ENCODE measurements at regions of chr10 and their contacts with region 1.

Region 1: GRCh38 chr10:119445311-119445934 is 97.1 kb downstream of the RGS10 start:
- DNase-seq: peak; percentile 94
- H3K4me3 ChIP-seq: peak overlapping the region in 1 of 2 experiments; percentile 23; a peak in 1 of 4 replicates
- H3K27ac ChIP-seq: no peak overlapping the region
- H3K4me1 ChIP-seq: peaks cover 3 to 8% of the 10 kb centered on the region in 2 experiments; a peak in 2 of 4 replicates
- H3K27me3 ChIP-seq: no peaks in the 10 kb centered on the region
- CTCF ChIP-seq: peak; percentile 90
- EP300 ChIP-seq: no peak
- RAD21 ChIP-seq: peak; percentile 86

Region 2: DNA sequence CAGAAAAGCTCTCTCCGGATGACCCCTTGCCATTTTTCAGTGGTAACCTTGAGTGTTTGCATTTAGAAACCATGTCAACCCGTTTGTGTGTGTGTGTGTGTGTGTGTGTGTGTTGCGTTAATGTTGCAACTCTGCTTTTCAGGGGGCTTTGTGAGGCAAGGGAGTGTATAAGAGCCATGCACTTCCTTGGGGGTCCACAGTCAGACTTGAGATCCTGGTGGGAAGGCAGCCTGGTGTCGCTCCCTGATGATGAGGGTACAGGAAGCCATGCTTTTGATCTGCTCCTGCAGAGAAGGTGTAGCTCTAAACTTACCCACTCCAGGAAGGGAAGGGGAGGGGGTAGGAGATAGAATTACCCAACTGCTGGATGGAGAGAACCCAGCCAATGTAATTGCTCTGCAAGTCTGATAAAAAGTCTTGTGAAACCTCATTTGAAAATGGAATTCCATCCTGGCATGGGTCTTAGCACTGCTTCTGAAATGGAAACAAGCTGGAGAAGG is 227.4 kb before region 1 on chr10:
- CTCF ChIA-PET with region 1: interaction called, 19 read pairs
- POLR2A ChIA-PET with region 1: no interaction called
- DNase-seq: no peak
- H3K4me3 ChIP-seq: no peak overlapping the region
- H3K27ac ChIP-seq: no peak overlapping the region
- H3K4me1 ChIP-seq: peaks cover 7 to 35% of the 10 kb centered on the region in 2 experiments; a peak in 3 of 4 replicates
- H3K27me3 ChIP-seq: no peaks in the 10 kb centered on the region
- CTCF ChIP-seq: no peak
- EP300 ChIP-seq: no peak
- RAD21 ChIP-seq: no peak

Region 3: DNA sequence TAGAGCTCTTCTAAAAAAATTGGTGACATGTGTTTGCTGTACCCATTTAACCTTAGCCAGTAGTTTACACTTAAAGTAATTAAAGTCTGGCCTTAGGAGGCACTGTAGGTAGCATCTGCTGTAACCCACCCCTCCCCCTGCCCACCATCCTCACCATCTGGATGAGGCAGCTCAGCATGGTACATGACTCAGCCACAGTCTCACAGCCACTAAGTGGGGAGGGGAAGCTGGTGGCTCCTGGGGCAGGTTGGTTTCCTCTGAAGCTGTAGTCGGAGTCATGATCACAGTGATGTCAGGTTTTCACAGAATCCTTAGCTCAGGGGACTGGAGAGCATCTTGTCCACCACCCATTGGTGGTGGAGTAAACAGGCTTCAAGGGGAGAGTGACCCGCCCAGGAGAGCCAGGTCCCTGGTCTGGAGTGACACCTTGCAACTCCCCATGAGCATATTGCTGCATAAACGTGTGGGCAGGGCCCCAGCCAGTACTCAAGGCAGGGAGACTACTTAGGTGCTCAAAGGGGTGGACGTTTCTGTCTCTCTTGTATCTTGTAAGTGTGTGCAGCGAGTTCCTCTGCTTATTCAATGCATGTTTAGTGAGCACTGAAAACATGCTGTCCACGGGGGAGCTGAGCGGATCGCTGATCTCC is 112.2 kb before region 1 on chr10:
- CTCF ChIA-PET with region 1: interaction called, 27 read pairs
- POLR2A ChIA-PET with region 1: no interaction called
- DNase-seq: no peak
- H3K4me3 ChIP-seq: no peak overlapping the region
- H3K27ac ChIP-seq: no peak overlapping the region
- H3K4me1 ChIP-seq: peaks cover 12 to 13% of the 10 kb centered on the region in 2 experiments; a peak in 2 of 4 replicates
- H3K27me3 ChIP-seq: no peaks in the 10 kb centered on the region
- CTCF ChIP-seq: no peak
- EP300 ChIP-seq: no peak
- RAD21 ChIP-seq: no peak

Region 4: GRCh38 chr10:119428789-119429188 is 16.6 kb before region 1 on chr10:
- CTCF ChIA-PET with region 1: interaction called, 150 read pairs
- POLR2A ChIA-PET with region 1: interaction called, 4 read pairs
- DNase-seq: no peak
- H3K4me3 ChIP-seq: no peak overlapping the region
- H3K27ac ChIP-seq: no peak overlapping the region
- H3K4me1 ChIP-seq: peaks cover 0 to 3% of the 10 kb centered on the region in 2 experiments; a peak in 1 of 4 replicates
- H3K27me3 ChIP-seq: no peaks in the 10 kb centered on the region
- CTCF ChIP-seq: no peak
- EP300 ChIP-seq: no peak
- RAD21 ChIP-seq: no peak

Region 5: GRCh38 chr10:119470920-119471702 is 25.7 kb after region 1 on chr10:
- CTCF ChIA-PET with region 1: interaction called, 11 read pairs
- POLR2A ChIA-PET with region 1: no interaction called
- DNase-seq: no peak
- H3K4me3 ChIP-seq: no peak overlapping the region
- H3K27ac ChIP-seq: no peak overlapping the region
- H3K4me1 ChIP-seq: no peaks in the 10 kb centered on the region
- H3K27me3 ChIP-seq: no peaks in the 10 kb centered on the region; the same call in 1 of the 2 replicates
- CTCF ChIP-seq: no peak
- EP300 ChIP-seq: no peak
- RAD21 ChIP-seq: no peak

Region 6: GRCh38 chr10:119555178-119555784 is 109.9 kb after region 1 on chr10:
- CTCF ChIA-PET with region 1: no interaction called
- POLR2A ChIA-PET with region 1: no interaction called
- DNase-seq: no peak
- H3K4me3 ChIP-seq: no peak overlapping the region
- H3K27ac ChIP-seq: no peak overlapping the region
- H3K4me1 ChIP-seq: no peaks in the 10 kb centered on the region
- H3K27me3 ChIP-seq: no peaks in the 10 kb centered on the region
- CTCF ChIP-seq: no peak
- EP300 ChIP-seq: no peak
- RAD21 ChIP-seq: no peak